ENCODE measurements at regions of chr10 and their contacts with region 1.

Region 1: GRCh38 chr10:96292971-96293920 is 11.0 kb upstream of the DNTT start:
- DNase-seq: no peak

Region 2: DNA sequence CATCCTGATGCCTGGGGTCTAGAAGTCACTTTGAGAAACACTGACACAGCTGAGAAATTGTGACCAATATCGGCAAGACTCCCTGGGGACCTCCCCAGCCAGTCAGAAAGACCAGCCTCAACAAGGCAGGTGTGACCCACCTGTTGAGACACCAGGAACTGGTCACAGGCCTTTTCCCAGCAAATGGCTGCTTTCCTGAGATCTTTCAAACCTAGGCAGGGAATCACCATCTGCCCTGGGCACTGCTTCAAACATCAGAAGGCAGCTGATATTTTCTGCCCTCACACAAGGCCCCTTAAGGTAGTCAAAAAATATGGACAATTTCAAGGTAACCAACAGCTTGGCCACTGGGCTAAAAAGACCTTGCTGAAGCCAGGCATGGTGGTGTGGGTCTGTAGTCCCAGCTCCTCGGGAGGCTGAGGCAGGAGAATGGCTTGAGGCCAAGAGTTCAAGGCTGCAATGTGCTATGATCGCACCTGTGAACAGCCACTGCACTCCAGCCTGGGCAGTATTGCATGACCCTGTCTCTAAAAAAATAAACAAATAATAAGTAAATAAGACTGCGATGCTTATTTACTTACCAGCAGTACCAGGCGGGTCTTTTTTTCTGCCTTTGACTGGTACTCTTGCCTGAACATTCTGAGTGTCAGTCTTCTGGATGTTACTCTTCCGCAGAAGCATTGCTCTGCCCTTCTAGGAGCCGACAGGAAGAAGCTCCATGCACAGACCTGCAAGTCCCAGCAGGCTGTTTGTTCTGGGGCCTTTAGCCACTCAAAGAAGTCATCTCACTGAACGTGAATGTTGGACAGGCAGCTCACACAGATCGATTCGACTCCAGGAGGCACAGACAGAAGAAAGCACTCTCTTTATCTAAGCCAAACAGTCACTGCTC is 791.8 kb before region 1 on chr10:
- intact Hi-C with region 1: no loop called
- DNase-seq: no peak

Region 3: GRCh38 chr10:96017191-96017687 is 276.0 kb before region 1 on chr10:
- intact Hi-C with region 1: loop called (anchors 5 kb)
- DNase-seq: no peak

Region 4: DNA sequence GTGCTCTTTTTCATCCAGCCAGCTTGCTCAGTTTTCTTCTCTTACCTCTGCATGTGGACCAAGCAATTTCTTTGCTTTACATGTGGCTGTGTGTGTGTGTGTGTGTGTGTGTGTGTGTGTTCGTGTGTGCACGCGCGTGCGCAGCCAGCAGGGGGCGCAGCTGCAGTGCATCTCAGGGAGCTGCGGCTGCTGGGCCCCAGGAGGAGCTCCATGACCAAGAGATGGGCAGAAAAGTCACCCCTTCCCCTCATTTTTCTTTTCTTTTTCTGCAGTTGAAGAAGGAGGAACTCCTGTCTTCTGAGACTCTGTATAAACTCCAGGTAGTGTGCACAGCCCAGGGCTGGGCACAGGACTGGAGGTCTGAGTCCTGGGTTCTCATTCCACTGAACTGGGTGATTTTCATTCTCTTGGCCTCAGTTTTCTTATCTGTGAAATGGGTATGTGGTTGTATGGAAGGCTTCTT is 63.6 kb before region 1 on chr10:
- intact Hi-C with region 1: loop called (anchors 2 kb)
- DNase-seq: no peak

Region 5: GRCh38 chr10:96513698-96514561 is 220.7 kb after region 1 on chr10 and contains the start of gene TLL2:
- intact Hi-C with region 1: no loop called
- DNase-seq: peak; percentile 92
- total RNA-seq, gene TLL2: 3.8 TPM